Esophagus muscularis mucosa (tissue), 4 donors: ENCODE measurements at regions of chr6 and their contacts with region 1.

Region 1: DNA sequence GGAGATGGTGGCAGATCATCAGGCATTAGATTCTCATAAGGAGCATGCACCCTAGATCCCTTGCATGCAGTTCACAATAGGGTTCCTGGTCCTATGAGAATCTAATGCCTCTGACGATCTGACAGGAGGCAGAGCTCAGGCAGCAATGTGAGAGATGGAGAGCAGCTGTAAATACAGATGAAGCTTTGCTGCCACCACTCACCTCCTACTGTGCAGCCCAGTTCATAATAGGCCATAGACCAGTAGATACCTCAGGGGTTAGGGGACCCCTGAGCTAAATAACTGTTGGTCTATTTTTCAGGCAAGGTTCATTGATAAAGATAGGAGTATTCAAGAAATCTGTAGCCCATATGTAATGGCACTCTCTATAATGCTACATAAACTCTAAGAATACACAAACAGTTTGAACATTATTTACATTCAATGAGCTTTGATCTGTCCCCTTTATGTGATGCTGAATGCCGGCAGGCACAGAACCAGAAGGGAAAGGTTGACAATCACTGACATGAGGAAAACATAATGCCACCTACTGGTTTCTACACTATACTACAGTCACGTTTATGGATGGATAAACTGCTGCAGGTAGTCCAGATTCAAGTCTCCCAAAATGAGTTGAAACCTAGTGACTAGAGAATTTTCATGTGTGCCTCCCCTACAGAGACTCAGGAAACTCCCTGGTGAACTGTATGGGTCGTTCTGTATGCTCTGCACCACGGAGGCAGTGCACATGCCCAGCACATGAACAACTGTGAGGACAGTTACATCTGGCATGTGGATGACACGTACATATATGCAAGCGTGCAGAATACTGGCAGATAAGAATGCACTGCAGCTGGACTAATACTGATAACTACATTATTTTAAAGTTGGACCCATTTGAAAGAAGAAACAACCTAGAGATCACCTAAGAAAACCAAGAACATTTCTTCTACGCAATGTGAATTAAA is 72.0 kb downstream of the DST start:
- DNase-seq: no peak
- H3K4me3 ChIP-seq: no peak overlapping the region
- H3K27ac ChIP-seq: no peak overlapping the region
- H3K4me1 ChIP-seq: peaks cover 5 to 47% (median 28%) of the 10 kb centered on the region in 4 donors
- H3K27me3 ChIP-seq: no peaks in the 10 kb centered on the region
- CTCF ChIP-seq: peak; percentile 51 to 74 (median 56)
- EP300 ChIP-seq: no peak
- POLR2A ChIP-seq: no peak

Region 2: DNA sequence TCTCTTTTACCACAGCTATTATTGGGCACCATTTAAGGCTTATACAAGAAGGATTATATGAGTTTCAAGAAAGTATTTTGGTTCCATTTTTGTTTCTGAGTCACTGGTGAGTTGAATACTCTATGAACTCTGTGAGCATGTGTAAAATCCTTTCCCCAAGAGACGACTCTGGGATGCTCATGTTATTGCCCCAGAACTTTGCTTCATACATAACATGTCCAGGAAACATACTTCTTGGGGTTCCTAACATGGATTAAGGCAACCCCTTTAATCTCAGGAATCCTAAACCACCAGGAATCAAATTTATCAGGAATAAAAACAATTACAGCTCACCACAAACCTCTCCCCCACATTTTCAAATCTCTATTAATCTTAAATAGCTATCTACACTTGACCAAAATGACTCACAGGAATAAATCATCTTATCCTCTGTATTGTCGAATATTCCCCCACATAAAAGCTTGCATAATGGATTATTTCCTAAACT is 205.8 kb before region 1 on chr6:
- intact Hi-C with region 1: loop called (anchors 5 kb)
- DNase-seq: no peak
- H3K4me3 ChIP-seq: no peak overlapping the region
- H3K27ac ChIP-seq: no peak overlapping the region
- H3K4me1 ChIP-seq: peaks cover 25 to 54% (median 44%) of the 10 kb centered on the region in 4 donors
- H3K27me3 ChIP-seq: no peaks in the 10 kb centered on the region
- CTCF ChIP-seq: no peak
- EP300 ChIP-seq: no peak
- POLR2A ChIP-seq: no peak